Dorsolateral prefrontal cortex (tissue), 120 donors: ENCODE measurements at regions of chr20 and their contacts with region 1.

Region 1: DNA sequence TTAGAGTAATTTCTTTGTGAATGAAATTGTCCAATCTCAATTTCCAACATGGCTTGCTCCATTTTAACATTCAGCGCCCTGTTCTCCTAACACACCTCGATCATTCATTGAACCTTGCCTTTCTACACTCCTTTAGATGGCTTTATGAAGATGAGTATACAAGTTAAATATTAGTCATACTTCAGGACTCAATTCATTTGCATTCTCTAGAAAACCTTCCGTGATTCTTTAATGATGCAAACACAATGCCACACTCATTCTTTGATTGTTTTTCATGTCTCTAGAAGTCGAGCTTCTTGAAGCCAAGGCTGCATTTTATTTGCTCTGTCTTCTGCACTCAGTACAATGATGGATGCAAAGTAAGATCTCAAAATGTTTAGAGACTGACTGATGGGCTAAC is 641.2 kb downstream of the DOK5 start:
- DNase-seq: no peak
- H3K4me3 ChIP-seq: no peak overlapping the region
- H3K27ac ChIP-seq: no peak overlapping the region
- H3K27me3 ChIP-seq: peaks cover 0 to 3% (median 0%) of the 10 kb centered on the region in 45 donors
- CTCF ChIP-seq: no peak

Region 2: DNA sequence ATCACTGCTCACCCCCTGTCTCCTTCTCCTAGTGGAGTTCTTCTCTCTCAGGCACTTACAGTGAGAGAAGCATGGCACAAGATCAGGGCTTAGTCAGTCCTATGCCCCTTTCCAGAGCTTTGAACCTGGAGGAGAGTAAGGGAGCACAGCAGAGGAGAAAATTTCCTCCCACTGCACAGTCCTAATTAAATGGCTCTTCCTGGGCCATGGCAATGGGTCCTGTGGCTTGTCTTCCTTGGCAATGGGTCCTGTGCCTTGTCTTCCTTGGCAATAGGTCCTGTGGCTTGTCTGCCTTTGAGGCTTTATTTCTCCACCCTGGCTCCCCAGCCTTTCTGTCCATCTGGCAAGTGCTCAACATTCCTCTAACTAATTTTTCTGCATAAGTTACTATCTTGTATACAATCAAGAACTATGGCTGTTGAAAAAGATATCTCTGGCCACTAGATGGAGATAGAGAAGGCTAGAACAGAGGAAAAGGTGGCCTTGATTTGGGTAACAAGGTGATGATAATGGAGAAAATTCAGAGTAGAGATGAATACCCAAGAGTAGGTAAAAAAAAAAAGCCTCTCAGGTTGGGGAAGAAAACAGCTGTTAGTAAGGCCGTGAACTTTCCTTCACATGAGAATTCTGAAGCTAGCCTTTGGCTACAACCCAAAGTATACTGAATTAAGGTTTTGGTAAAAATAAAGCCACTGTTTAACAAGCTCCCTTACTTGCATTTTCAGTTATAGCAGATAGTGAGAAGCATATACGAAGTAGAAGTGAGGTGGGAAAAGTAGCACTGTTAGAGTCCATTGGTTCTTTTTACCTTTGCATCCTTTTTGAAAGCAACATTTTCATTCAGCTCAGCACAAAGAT is 136.3 kb before region 1 on chr20:
- intact Hi-C with region 1: no loop called
- DNase-seq: no peak
- H3K4me3 ChIP-seq: no peak overlapping the region
- H3K27ac ChIP-seq: no peak overlapping the region
- H3K27me3 ChIP-seq: peaks cover 0 to 4% (median 0%) of the 10 kb centered on the region in 45 donors
- CTCF ChIP-seq: peak in 49 of 56 donors; percentile 17 to 66 (median 40)

Region 3: GRCh38 chr20:55172310-55172995 is 55.9 kb after region 1 on chr20:
- intact Hi-C with region 1: loop called in 1 of 2 experiments (anchors 10 kb)
- DNase-seq: no peak
- H3K4me3 ChIP-seq: no peak overlapping the region
- H3K27ac ChIP-seq: no peak overlapping the region
- H3K27me3 ChIP-seq: peaks cover 0 to 26% (median 0%) of the 10 kb centered on the region in 45 donors
- CTCF ChIP-seq: no peak